Panc1 (cell line): ENCODE measurements at regions of chr14 and their contacts with region 1.

Region 1: GRCh38 chr14:60622917-60623257 is 26.4 kb downstream of the SIX1 start:
- DNase-seq: no peak
- ATAC-seq: no peak
- H3K4me3 ChIP-seq: no peak overlapping the region
- H3K27ac ChIP-seq: no peak overlapping the region; the same call in 1 of the 2 replicates
- H3K4me1 ChIP-seq: 0 out of 2 replicates have a peak, but pooled peaks cover 3% of the 10 kb centered on the region
- H3K27me3 ChIP-seq: no peaks in the 10 kb centered on the region
- CTCF ChIP-seq: no peak

Region 2: GRCh38 chr14:61196792-61197191 is 573.9 kb after region 1 on chr14:
- CTCF ChIA-PET with region 1: no interaction called
- POLR2A ChIA-PET with region 1: no interaction called
- in situ Hi-C with region 1: no loop called
- intact Hi-C with region 1: loop called (anchors 10 kb)
- DNase-seq: no peak
- ATAC-seq: no peak
- H3K4me3 ChIP-seq: no peak overlapping the region
- H3K27ac ChIP-seq: no peak overlapping the region
- H3K4me1 ChIP-seq: no peaks in the 10 kb centered on the region
- H3K27me3 ChIP-seq: no peaks in the 10 kb centered on the region; the same call in none of the 2 replicates
- CTCF ChIP-seq: peak; percentile 27; the same call in 1 of the 2 replicates

Region 3: DNA sequence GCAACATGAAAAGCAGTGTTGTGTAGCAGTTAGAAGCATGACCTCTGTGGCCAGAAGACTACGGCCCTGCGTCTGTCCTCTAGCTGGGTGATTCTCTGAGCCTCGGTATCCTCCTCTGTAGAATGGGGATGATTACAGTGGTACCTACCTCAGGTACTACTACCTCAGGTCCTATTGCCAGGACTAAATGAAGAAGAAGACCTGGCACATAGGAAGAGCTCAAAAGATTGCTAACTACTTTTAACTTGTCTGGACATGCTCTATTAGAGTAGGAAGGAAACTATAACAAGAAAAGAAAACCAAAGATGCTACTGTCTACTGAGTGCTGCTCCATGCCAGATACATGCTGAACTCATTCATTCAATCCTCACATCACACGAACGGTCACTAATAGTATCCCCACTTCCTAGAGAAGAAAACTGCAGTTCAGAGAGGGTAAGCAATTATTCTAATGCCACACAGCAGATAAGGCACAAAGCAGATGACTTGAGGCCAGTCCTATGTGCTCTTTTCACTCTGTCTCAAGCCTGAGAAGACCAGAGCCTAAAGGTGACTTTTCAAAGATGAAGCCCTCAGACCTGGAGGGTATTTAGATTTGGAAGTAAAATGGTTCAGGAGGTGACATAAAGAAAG is 964.3 kb after region 1 on chr14:
- CTCF ChIA-PET with region 1: interaction called, 10 read pairs
- POLR2A ChIA-PET with region 1: no interaction called
- in situ Hi-C with region 1: no loop called
- intact Hi-C with region 1: no loop called
- DNase-seq: no peak
- ATAC-seq: no peak
- H3K4me3 ChIP-seq: no peak overlapping the region
- H3K27ac ChIP-seq: no peak overlapping the region
- H3K4me1 ChIP-seq: no peaks in the 10 kb centered on the region
- H3K27me3 ChIP-seq: no peaks in the 10 kb centered on the region
- CTCF ChIP-seq: no peak